PC-9 (cell line): ENCODE measurements at regions of chr4 and their contacts with region 1.

Region 1: GRCh38 chr4:168784786-168785461 is 225.1 kb downstream of the CBR4 start:
- DNase-seq: peak in 1 of 2 experiments; percentile 81
- H3K4me3 ChIP-seq: no peak overlapping the region
- H3K27ac ChIP-seq: no peak overlapping the region
- H3K4me1 ChIP-seq: no peaks in the 10 kb centered on the region
- H3K27me3 ChIP-seq: no peaks in the 10 kb centered on the region
- CTCF ChIP-seq: no peak

Region 2: GRCh38 chr4:167168611-167169010 is 1616.3 kb before region 1 on chr4:
- CTCF ChIA-PET with region 1: no interaction called
- POLR2A ChIA-PET with region 1: interaction called, 13 read pairs
- intact Hi-C with region 1: no loop called
- DNase-seq: no peak
- H3K4me3 ChIP-seq: no peak overlapping the region
- H3K27ac ChIP-seq: no peak overlapping the region
- H3K4me1 ChIP-seq: no peaks in the 10 kb centered on the region
- H3K27me3 ChIP-seq: no peaks in the 10 kb centered on the region
- CTCF ChIP-seq: no peak

Region 3: GRCh38 chr4:168528131-168528949 is 256.6 kb before region 1 on chr4:
- CTCF ChIA-PET with region 1: no interaction called
- POLR2A ChIA-PET with region 1: no interaction called
- intact Hi-C with region 1: no loop called
- DNase-seq: no peak
- H3K4me3 ChIP-seq: no peak overlapping the region
- H3K27ac ChIP-seq: no peak overlapping the region
- H3K4me1 ChIP-seq: peaks cover 11% of the 10 kb centered on the region; the same call in 1 of the 2 replicates
- H3K27me3 ChIP-seq: no peaks in the 10 kb centered on the region
- CTCF ChIP-seq: no peak

Region 4: GRCh38 chr4:168600796-168601583 is 183.9 kb before region 1 on chr4:
- CTCF ChIA-PET with region 1: interaction called, 12 read pairs
- POLR2A ChIA-PET with region 1: interaction called, 5 read pairs
- intact Hi-C with region 1: no loop called
- DNase-seq: peak; percentile 25 to 90
- H3K4me3 ChIP-seq: no peak overlapping the region
- H3K27ac ChIP-seq: peak overlapping the region; percentile 80
- H3K4me1 ChIP-seq: peaks cover 63% of the 10 kb centered on the region
- H3K27me3 ChIP-seq: no peaks in the 10 kb centered on the region
- CTCF ChIP-seq: no peak

Region 5: GRCh38 chr4:168765726-168766125 is 19.2 kb before region 1 on chr4:
- CTCF ChIA-PET with region 1: no interaction called
- POLR2A ChIA-PET with region 1: no interaction called
- intact Hi-C with region 1: loop called (anchors 1 kb)
- DNase-seq: peak in 1 of 2 experiments; percentile 73
- H3K4me3 ChIP-seq: no peak overlapping the region
- H3K27ac ChIP-seq: no peak overlapping the region
- H3K4me1 ChIP-seq: no peaks in the 10 kb centered on the region
- H3K27me3 ChIP-seq: no peaks in the 10 kb centered on the region
- CTCF ChIP-seq: no peak

Region 6: DNA sequence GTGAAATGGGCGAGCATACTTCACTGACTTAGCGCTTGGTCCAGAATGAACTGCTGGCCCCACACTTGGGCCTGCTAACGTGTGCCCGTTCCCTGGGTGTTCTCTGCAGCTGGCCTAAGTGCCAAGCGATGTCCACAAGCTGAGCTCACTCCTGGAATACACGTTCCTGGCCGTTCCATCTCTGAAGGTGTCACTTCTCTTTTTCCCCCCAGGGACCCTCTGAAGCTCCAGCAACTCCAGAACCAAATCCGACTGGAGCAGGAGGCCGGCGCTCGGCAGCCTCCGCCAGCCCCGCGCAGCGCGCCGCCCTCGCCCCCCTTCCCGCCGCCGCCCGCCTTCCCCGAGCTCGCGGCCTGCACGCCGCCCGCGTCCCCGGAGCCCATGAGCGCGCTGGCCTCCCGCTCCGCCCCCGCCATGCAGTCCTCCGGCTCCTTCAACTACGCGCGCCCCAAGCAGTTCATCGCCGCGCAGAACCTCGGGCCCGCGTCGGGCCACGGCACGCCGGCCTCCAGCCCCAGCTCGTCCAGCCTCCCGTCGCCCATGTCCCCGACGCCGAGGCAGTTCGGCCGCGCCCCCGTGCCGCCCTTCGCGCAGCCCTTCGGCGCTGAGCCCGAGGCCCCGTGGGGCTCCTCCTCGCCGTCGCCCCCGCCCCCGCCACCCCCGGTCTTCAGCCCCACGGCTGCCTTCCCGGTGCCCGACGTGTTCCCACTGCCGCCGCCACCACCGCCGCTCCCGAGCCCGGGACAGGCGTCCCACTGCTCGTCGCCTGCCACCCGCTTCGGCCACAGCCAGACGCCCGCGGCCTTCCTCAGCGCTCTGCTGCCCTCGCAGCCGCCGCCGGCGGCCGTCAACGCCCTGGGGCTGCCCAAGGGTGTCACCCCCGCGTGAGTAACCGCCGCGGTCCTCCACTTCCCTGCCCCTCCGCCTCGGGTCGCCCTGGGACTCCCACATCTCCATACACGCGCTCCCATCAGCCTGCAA is 92.9 kb after region 1 on chr4:
- CTCF ChIA-PET with region 1: no interaction called
- POLR2A ChIA-PET with region 1: no interaction called
- intact Hi-C with region 1: loop called (anchors 5 kb)
- DNase-seq: peak in 1 of 2 experiments; percentile 49
- H3K4me3 ChIP-seq: no peak overlapping the region
- H3K27ac ChIP-seq: no peak overlapping the region
- H3K4me1 ChIP-seq: no peaks in the 10 kb centered on the region
- H3K27me3 ChIP-seq: no peaks in the 10 kb centered on the region
- CTCF ChIP-seq: no peak